ENCODE measurements at regions of chr14 and their contacts with region 1.

Region 1: GRCh38 chr14:23984891-23985602 is 3.7 kb upstream of the DHRS4L2 start:
- DNase-seq: no peak
- ATAC-seq: no peak
- H3K4me3 ChIP-seq: no peak overlapping the region
- H3K4me3 Mint-ChIP-seq: no peak overlapping the region
- H3K27ac ChIP-seq: no peak overlapping the region
- H3K27ac Mint-ChIP-seq: no peak overlapping the region
- H3K4me1 ChIP-seq: peaks cover 3 to 14% of the 10 kb centered on the region in 2 donors
- H3K4me1 Mint-ChIP-seq: peaks cover 23% of the 10 kb centered on the region
- H3K27me3 ChIP-seq: no peaks in the 10 kb centered on the region
- H3K27me3 Mint-ChIP-seq: no peaks in the 10 kb centered on the region
- CTCF ChIP-seq: no peak

Region 2: GRCh38 chr14:22822571-22823098 is 1162.4 kb before region 1 on chr14:
- CTCF ChIA-PET with region 1: no interaction called
- POLR2A ChIA-PET with region 1: no interaction called
- intact Hi-C with region 1: no loop called
- DNase-seq: peak; percentile 87
- ATAC-seq: peak; percentile 67
- H3K4me3 ChIP-seq: peak overlapping the region; percentile 49 to 85 (median 56)
- H3K4me3 Mint-ChIP-seq: peak overlapping the region; percentile 88
- H3K27ac ChIP-seq: peak overlapping the region; percentile 65 to 71
- H3K27ac Mint-ChIP-seq: peak overlapping the region; percentile 94
- H3K4me1 ChIP-seq: peaks cover 31 to 47% of the 10 kb centered on the region in 2 donors
- H3K4me1 Mint-ChIP-seq: peaks cover 61% of the 10 kb centered on the region
- H3K27me3 ChIP-seq: no peaks in the 10 kb centered on the region
- H3K27me3 Mint-ChIP-seq: no peaks in the 10 kb centered on the region
- CTCF ChIP-seq: peak; percentile 82

Region 3: DNA sequence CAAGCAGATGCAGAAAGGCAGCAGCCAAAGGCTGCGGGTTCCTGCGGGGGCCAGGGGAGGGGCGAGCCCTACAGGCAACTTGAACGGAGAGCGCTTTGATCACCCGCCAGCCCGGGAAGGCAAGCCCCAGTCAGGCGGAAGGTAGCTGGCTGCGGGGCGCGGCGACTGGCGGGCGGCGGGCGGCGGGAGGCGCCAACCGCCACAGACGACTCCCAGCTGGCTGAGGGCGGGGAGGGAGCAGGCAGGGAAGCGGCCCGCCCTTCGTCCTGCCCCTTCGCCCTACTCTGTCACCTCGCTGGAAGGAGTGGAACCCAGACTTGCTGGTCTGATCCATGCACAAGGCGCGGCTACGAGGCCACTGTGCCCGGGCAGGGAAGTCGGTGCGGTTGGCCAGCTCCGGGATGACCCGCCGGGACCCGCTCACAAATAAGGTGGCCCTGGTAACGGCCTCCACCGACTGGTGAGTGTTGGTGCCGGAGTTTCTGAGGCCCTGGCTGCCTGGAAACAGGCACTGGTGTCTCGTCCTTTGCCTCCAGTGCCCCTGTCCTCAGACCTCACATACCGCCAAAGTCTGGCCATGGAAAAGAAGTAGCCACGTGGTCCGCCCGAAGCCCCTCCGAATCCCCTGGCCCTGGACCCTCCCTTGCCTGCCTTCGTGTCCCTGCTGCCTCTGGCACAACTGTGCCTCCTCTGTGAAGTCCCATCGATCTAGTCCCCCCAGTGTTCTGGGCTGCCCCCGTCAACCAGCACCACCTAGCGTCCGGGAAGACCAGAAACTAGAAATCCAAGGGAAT is 51.3 kb after region 1 on chr14:
- CTCF ChIA-PET with region 1: no interaction called
- POLR2A ChIA-PET with region 1: no interaction called
- intact Hi-C with region 1: loop called (anchors 5 kb)
- DNase-seq: peak; percentile 75
- ATAC-seq: peak; percentile 92
- H3K4me3 ChIP-seq: peak overlapping the region; percentile 34 to 77 (median 59)
- H3K4me3 Mint-ChIP-seq: peak overlapping the region; percentile 98
- H3K27ac ChIP-seq: peak overlapping the region; percentile 33 to 38
- H3K27ac Mint-ChIP-seq: peak overlapping the region; percentile 87
- H3K4me1 ChIP-seq: peaks cover 0 to 9% of the 10 kb centered on the region in 2 donors
- H3K4me1 Mint-ChIP-seq: peaks cover 10% of the 10 kb centered on the region
- H3K27me3 ChIP-seq: no peaks in the 10 kb centered on the region
- H3K27me3 Mint-ChIP-seq: no peaks in the 10 kb centered on the region
- CTCF ChIP-seq: peak; percentile 68

Region 4: GRCh38 chr14:24123508-24124417 is 138.7 kb after region 1 on chr14:
- CTCF ChIA-PET with region 1: no interaction called
- POLR2A ChIA-PET with region 1: no interaction called
- intact Hi-C with region 1: no loop called
- DNase-seq: peak; percentile 71
- ATAC-seq: peak; percentile 56
- H3K4me3 ChIP-seq: no peak overlapping the region
- H3K4me3 Mint-ChIP-seq: peak overlapping the region; percentile 39
- H3K27ac ChIP-seq: peak overlapping the region; percentile 30 to 92
- H3K27ac Mint-ChIP-seq: peak overlapping the region; percentile 91
- H3K4me1 ChIP-seq: peaks cover 33 to 34% of the 10 kb centered on the region in 2 donors
- H3K4me1 Mint-ChIP-seq: peaks cover 33% of the 10 kb centered on the region
- H3K27me3 ChIP-seq: no peaks in the 10 kb centered on the region
- H3K27me3 Mint-ChIP-seq: no peaks in the 10 kb centered on the region
- CTCF ChIP-seq: no peak

Region 5: DNA sequence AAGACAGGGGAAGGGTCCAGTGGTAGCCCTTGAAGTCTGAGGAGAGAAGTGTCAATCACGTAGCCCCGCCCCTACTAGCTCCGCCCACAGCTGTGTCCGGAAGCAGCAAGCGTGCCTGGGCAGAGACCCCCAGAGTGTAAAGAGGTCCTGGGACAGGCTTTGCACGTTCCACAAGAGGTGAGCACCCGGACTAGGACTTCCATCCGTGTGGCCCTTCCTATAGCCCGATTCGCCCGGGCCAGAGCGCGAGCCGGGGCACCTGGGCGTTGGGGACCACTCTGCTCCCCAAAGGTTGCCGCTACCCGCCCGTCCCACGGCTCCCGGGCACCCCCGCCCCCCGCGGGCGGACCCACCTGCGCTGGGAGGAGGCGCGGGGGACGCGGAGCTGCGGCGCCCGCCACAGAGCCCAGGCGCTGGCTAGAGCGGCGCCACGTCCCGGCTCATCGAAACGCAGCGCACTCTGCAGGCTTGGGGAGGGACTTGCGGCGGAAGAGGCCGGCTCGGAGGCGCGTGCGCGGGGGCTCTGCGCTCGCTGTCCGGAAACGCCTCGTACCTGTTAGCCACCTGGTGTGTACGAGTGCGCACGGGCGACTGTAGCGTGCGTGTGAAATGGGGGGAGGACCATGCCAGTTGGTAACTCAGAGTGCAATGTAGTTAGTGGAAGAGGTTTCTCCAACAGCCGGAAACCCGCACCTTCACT is 286.2 kb after region 1 on chr14 and contains the start of gene RABGGTA:
- CTCF ChIA-PET with region 1: no interaction called
- POLR2A ChIA-PET with region 1: no interaction called
- intact Hi-C with region 1: no loop called
- DNase-seq: peak; percentile 98
- ATAC-seq: peak; percentile 87
- H3K4me3 ChIP-seq: peak within 1 kb of the TSS; percentile 45 to 96 (median 93)
- H3K4me3 Mint-ChIP-seq: peak within 1 kb of the TSS; percentile 94
- H3K27ac ChIP-seq: peak within 1 kb of the TSS; percentile 93 to 97
- H3K27ac Mint-ChIP-seq: peak within 1 kb of the TSS; percentile 94
- H3K4me1 ChIP-seq: peaks cover 32 to 39% of the 10 kb centered on the region in 2 donors
- H3K4me1 Mint-ChIP-seq: peaks cover 48% of the 10 kb centered on the region
- H3K27me3 ChIP-seq: no peaks in the 10 kb centered on the region
- H3K27me3 Mint-ChIP-seq: no peaks in the 10 kb centered on the region
- CTCF ChIP-seq: peak; percentile 75
- total RNA-seq, gene RABGGTA: 57.9 and 70.1 TPM in 2 replicates